ENCODE measurements at regions of chr22 and their contacts with region 1.

Region 1: DNA sequence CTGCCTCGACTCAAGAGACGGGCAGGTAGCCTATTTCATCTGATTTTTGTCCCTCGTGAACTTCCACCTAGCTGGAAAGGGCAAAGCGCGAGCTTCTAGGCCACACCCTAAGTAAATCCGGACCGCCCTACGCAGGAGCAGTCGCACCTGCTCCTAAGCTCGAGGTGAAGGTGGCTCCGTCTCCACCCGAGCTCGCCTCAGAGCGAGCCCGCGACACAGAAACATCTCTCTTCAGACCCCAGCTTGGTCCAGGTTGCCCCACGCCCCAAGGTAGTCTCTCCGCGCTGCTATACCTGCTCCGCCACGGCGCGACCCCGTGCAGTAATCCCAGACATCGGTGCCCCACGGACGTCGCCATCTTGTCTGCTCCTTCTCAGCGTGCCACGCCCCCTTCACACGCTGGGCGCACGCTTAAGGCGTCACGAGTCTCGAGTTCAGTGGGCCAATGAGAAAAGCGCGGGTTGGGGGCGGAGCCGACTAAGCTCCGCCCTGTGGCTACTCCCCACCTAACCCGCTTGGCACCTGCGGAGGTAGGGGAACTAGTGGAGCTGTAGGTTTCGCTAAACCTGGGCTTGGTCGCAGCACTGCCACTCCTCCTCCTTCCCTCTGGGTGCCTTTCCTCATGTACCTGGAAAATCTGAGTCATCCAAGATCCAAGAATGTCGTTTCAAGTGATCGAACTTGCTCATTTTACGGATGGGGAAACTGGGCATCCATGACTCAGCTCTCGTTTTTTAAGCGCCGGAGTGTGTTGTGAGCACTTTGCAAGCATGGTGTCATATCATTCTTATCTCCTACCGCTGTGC is at the start of gene PISD:
- DNase-seq: peak; percentile 96
- ATAC-seq: peak; percentile 96
- H3K4me3 Mint-ChIP-seq: peak within 1 kb of the TSS; percentile 96
- H3K27ac Mint-ChIP-seq: peak within 1 kb of the TSS; percentile 91
- H3K4me1 Mint-ChIP-seq: peaks cover 32% of the 10 kb centered on the region
- H3K27me3 Mint-ChIP-seq: no peaks in the 10 kb centered on the region
- CTCF ChIP-seq: no peak
- total RNA-seq, gene PISD: 53.7 and 61.6 TPM in 2 replicates

Region 2: GRCh38 chr22:31544481-31545480 is 117.3 kb before region 1 on chr22:
- CTCF ChIA-PET with region 1: no interaction called
- POLR2A ChIA-PET with region 1: no interaction called
- intact Hi-C with region 1: no loop called
- DNase-seq: no peak
- ATAC-seq: no peak
- H3K4me3 Mint-ChIP-seq: no peak overlapping the region
- H3K27ac Mint-ChIP-seq: no peak overlapping the region
- H3K4me1 Mint-ChIP-seq: peaks cover 5% of the 10 kb centered on the region
- H3K27me3 Mint-ChIP-seq: no peaks in the 10 kb centered on the region
- CTCF ChIP-seq: no peak

Region 3: GRCh38 chr22:31637938-31638618 is 24.0 kb before region 1 on chr22:
- CTCF ChIA-PET with region 1: interaction called, 9 read pairs
- POLR2A ChIA-PET with region 1: interaction called, 33 read pairs
- intact Hi-C with region 1: loop called (anchors 1 kb)
- DNase-seq: no peak
- ATAC-seq: peak; percentile 67
- H3K4me3 Mint-ChIP-seq: peak overlapping the region; percentile 79
- H3K27ac Mint-ChIP-seq: peak overlapping the region; percentile 86
- H3K4me1 Mint-ChIP-seq: peaks cover 62% of the 10 kb centered on the region
- H3K27me3 Mint-ChIP-seq: no peaks in the 10 kb centered on the region
- CTCF ChIP-seq: no peak

Region 4: GRCh38 chr22:31676700-31677099 is 14.6 kb after region 1 on chr22:
- CTCF ChIA-PET with region 1: interaction called, 12 read pairs
- POLR2A ChIA-PET with region 1: interaction called, 41 read pairs
- intact Hi-C with region 1: loop called (anchors 1 kb)
- DNase-seq: peak; percentile 84
- ATAC-seq: peak; percentile 99
- H3K4me3 Mint-ChIP-seq: peak overlapping the region; percentile 96
- H3K27ac Mint-ChIP-seq: peak overlapping the region; percentile 94
- H3K4me1 Mint-ChIP-seq: peaks cover 25% of the 10 kb centered on the region
- H3K27me3 Mint-ChIP-seq: no peaks in the 10 kb centered on the region
- CTCF ChIP-seq: no peak

Region 5: DNA sequence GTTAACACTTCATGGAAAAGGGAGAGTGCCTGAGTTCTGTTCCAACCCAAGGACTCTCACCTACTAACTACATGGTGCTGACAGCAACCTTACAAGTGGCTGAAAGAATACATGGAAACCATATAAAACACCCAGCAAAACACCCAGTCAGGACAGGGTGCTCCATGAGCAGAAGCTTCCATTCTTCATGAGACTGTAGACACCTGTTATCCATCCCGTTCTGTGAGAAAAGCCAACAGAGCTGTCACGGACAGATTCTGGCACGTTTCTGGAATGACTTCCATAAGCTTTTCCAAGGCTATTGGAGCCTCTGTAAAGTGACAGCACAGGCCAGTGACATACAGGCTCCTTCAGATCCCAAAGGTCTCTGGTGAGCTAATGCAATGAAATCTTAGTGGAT is 64.6 kb after region 1 on chr22:
- CTCF ChIA-PET with region 1: no interaction called
- POLR2A ChIA-PET with region 1: no interaction called
- intact Hi-C with region 1: no loop called
- DNase-seq: no peak
- ATAC-seq: no peak
- H3K4me3 Mint-ChIP-seq: no peak overlapping the region
- H3K27ac Mint-ChIP-seq: no peak overlapping the region
- H3K4me1 Mint-ChIP-seq: no peaks in the 10 kb centered on the region
- H3K27me3 Mint-ChIP-seq: no peaks in the 10 kb centered on the region
- CTCF ChIP-seq: no peak

Region 6: GRCh38 chr22:32265882-32266767 is 604.1 kb after region 1 on chr22:
- CTCF ChIA-PET with region 1: no interaction called
- POLR2A ChIA-PET with region 1: no interaction called
- intact Hi-C with region 1: loop called (anchors 10 kb)
- DNase-seq: no peak
- ATAC-seq: peak; percentile 42
- H3K4me3 Mint-ChIP-seq: no peak overlapping the region
- H3K27ac Mint-ChIP-seq: no peak overlapping the region
- H3K4me1 Mint-ChIP-seq: no peaks in the 10 kb centered on the region
- H3K27me3 Mint-ChIP-seq: peaks cover 4% of the 10 kb centered on the region
- CTCF ChIP-seq: no peak

Measured in activated B cell treated with CpG ODN at 0.5 μM for 24 hours (primary cell).